T-cell (primary cell): ENCODE measurements at regions of chr6 and their contacts with region 1.

Region 1: DNA sequence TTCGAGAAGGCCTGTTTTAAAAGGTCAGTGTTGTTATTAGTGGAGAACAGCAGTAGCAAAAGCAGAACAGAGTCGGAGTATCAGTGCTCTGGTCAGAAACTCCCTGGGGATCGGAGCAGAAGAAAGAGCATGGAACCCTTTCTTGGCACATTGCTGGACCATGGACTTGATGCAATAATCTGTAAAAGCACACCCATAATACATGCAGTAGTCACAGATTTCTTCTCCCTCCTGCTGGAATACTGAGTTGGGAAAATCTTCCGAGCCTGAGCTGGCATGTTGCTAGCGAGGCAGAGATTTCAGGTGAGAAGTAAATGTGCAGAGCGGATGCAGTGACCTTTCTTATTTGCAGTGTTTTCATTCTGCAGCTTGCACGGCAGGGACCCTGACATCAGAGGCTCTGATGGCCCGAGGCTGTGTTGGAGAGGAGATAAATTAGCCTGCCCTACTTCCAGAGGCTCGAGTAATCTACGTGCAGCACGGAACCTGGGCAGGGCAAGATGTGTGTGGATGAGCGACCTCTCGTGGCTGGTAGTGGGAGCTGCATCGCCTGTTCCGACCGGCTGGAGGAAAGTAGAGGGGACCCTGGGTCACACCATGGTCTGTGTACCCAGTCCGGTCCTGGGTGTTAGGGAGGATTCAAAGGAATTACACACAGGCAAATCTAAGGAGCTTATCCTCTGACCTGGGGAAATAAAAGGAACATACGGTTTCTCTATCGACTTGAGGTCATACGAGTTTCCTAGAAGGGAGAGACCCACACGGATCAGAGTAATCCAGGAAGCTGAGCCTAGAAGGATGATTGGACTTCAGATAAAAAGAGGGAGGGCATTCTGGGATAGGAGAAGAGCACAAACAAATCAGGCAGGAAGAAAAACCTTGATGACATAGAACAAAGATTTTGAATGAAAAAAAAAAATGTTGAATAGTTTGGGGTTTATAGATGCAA is 137.0 kb upstream of the STMND1 start:
- DNase-seq: peak in 34 of 35 experiments; percentile 8 to 73 (median 48)
- ATAC-seq: peak; percentile 70 to 82 (median 72)
- H3K4me3 ChIP-seq: no peak overlapping the region
- H3K4me3 Mint-ChIP-seq: no peak overlapping the region
- H3K27ac ChIP-seq: no peak overlapping the region
- H3K27ac Mint-ChIP-seq: no peak overlapping the region
- H3K4me1 ChIP-seq: peaks cover 0 to 5% of the 10 kb centered on the region in 2 experiments
- H3K4me1 Mint-ChIP-seq: peaks cover 4 to 7% (median 5%) of the 10 kb centered on the region in 3 donors
- H3K27me3 ChIP-seq: peaks cover 0 to 15% of the 10 kb centered on the region in 2 experiments
- H3K27me3 Mint-ChIP-seq: peaks cover 17 to 21% of the 10 kb centered on the region in 2 donors

Region 2: DNA sequence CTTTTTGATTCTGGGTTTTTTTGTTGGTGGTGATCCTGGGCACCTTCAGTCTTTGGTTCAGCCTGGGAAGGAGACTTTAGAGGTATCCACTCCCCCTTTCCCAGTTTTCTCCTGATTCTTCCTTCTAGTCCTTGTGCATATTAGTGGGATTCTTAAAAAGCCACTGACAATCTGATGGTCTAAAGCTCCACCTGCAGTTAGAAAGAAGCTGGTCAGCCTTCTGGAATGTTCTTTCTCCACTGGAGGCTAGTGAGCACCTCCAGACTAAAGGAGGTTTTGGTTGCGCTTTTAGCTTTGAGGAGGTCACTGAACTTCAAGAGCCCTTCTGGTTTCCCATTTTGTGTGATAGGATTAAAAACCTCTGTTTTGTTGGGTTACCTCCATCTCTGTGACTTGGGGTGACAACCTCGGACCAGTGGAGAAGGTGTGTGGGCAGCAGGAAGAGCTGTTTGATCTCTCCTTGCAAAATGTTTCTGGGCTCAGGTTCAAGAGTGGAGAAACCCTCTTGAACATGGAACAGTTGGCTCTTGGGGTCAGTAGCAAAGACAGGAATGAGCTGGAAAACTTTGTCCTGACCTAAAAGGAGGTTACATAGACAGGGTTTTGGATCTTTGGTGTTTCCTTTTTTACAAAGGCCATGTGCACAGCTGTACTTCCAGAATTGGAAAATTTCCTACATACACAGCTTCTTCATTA is 1690.0 kb before region 1 on chr6:
- CTCF ChIA-PET with region 1: no interaction called
- POLR2A ChIA-PET with region 1: interaction called in 1 of 2 experiments, 10 read pairs
- DNase-seq: no peak
- ATAC-seq: no peak
- H3K4me3 ChIP-seq: no peak overlapping the region
- H3K4me3 Mint-ChIP-seq: no peak overlapping the region
- H3K27ac ChIP-seq: no peak overlapping the region
- H3K27ac Mint-ChIP-seq: no peak overlapping the region
- H3K4me1 ChIP-seq: peaks cover 10 to 11% of the 10 kb centered on the region in 2 experiments
- H3K4me1 Mint-ChIP-seq: peaks cover 81 to 91% (median 84%) of the 10 kb centered on the region in 3 donors
- H3K27me3 ChIP-seq: no peaks in the 10 kb centered on the region
- H3K27me3 Mint-ChIP-seq: no peaks in the 10 kb centered on the region

Region 3: DNA sequence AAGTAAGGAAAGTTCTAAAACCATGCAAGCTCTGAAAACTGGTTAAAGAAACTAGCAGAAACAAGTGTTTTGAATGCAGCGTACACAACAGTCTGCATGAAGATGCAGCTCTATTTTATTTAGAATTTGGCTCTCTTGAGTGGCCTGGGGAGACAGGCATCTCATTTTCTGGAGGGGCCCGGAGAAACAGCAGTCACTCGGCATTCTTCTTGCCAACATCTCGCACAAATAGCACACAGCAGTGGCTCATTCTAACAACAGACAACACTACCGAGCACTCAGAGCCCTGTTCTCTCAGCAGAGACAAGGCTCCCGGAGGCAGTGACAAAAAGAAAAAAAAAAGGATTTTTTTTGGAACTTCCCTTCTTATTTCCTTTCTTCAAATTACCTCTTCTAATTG is 28.6 kb after region 1 on chr6:
- CTCF ChIA-PET with region 1: no interaction called
- POLR2A ChIA-PET with region 1: no interaction called
- DNase-seq: no peak
- ATAC-seq: no peak
- H3K4me3 ChIP-seq: no peak overlapping the region
- H3K4me3 Mint-ChIP-seq: no peak overlapping the region
- H3K27ac ChIP-seq: no peak overlapping the region
- H3K27ac Mint-ChIP-seq: no peak overlapping the region
- H3K4me1 ChIP-seq: no peaks in the 10 kb centered on the region
- H3K4me1 Mint-ChIP-seq: no peaks in the 10 kb centered on the region
- H3K27me3 ChIP-seq: peaks cover 0 to 4% of the 10 kb centered on the region in 2 experiments
- H3K27me3 Mint-ChIP-seq: peaks cover 23 to 41% of the 10 kb centered on the region in 2 donors